Activated CD8-positive, alpha-beta T cell treated with anti-CD3 and anti-CD28 coated beads for 36 hours (primary cell): ENCODE measurements at regions of chr19 and their contacts with region 1.

Region 1: GRCh38 chr19:45692187-45693105 is at the start of gene QPCTL:
- DNase-seq: peak; percentile 99
- ATAC-seq: peak; percentile 91
- H3K4me3 Mint-ChIP-seq: peak within 1 kb of the TSS; percentile 99
- H3K27ac Mint-ChIP-seq: peak within 1 kb of the TSS; percentile 100
- H3K4me1 Mint-ChIP-seq: peaks cover 27% of the 10 kb centered on the region
- H3K27me3 Mint-ChIP-seq: no peaks in the 10 kb centered on the region
- CTCF ChIP-seq: no peak
- total RNA-seq, gene QPCTL: 31.6 to 31.7 TPM

Region 2: GRCh38 chr19:45681391-45682015 is 10.9 kb before region 1 on chr19:
- CTCF ChIA-PET with region 1: interaction called, 101 read pairs
- POLR2A ChIA-PET with region 1: interaction called, 34 read pairs
- intact Hi-C with region 1: no loop called
- DNase-seq: peak; percentile 91
- ATAC-seq: peak; percentile 79
- H3K4me3 Mint-ChIP-seq: peak overlapping the region; percentile 67
- H3K27ac Mint-ChIP-seq: peak overlapping the region; percentile 46
- H3K4me1 Mint-ChIP-seq: peaks cover 17% of the 10 kb centered on the region
- H3K27me3 Mint-ChIP-seq: peaks cover 3% of the 10 kb centered on the region
- CTCF ChIP-seq: peak; percentile 99

Region 3: GRCh38 chr19:45705115-45705514 is 12.7 kb after region 1 on chr19:
- CTCF ChIA-PET with region 1: interaction called, 16 read pairs
- POLR2A ChIA-PET with region 1: interaction called, 24 read pairs
- intact Hi-C with region 1: no loop called
- DNase-seq: no peak
- ATAC-seq: no peak
- H3K4me3 Mint-ChIP-seq: no peak overlapping the region
- H3K27ac Mint-ChIP-seq: no peak overlapping the region
- H3K4me1 Mint-ChIP-seq: peaks cover 5% of the 10 kb centered on the region
- H3K27me3 Mint-ChIP-seq: no peaks in the 10 kb centered on the region
- CTCF ChIP-seq: no peak

Region 4: DNA sequence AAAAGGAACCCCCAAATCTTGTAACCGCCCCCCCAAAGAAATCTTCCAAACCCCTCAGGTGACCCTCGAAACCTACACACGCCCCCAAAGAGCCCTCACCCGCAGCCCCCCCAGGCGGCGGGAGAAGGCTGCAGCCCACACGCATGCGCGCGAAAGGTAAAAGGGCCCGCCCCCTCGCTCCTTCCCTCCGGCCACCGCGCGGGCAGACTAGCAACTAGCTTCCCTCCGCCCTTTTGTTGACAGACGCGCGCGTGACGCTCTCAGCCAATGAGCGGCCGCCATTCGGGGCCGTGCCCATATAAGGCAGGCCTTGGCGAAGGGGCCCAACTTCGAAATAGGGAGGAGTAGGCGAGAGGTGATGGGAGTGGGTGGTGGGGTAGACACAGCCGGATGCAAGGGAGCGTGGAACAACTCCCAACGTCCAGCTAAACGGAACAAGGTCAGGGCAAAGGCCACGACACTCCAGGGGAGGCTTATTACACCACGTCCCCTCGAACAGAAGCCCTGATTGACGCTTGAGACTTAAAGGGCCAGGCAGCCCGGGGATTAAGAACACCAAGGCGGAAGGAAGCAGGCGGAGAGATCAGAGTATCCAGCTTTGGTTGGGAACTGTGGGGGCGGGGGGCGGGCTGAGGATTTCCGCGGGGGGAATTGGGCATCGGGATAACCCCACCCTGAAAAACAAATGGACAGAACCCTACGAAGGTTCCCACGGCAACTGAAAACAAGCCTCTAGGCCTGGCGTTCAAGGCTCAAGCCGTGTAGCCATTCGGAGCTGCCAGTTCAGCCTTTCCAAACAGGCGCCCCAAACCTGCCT is 24.9 kb after region 1 on chr19:
- CTCF ChIA-PET with region 1: interaction called, 62 read pairs
- POLR2A ChIA-PET with region 1: interaction called, 40 read pairs
- intact Hi-C with region 1: no loop called
- DNase-seq: peak; percentile 99
- ATAC-seq: peak; percentile 97
- H3K4me3 Mint-ChIP-seq: peak overlapping the region; percentile 95
- H3K27ac Mint-ChIP-seq: peak overlapping the region; percentile 93
- H3K4me1 Mint-ChIP-seq: peaks cover 33% of the 10 kb centered on the region
- H3K27me3 Mint-ChIP-seq: no peaks in the 10 kb centered on the region
- CTCF ChIP-seq: no peak

Region 5: DNA sequence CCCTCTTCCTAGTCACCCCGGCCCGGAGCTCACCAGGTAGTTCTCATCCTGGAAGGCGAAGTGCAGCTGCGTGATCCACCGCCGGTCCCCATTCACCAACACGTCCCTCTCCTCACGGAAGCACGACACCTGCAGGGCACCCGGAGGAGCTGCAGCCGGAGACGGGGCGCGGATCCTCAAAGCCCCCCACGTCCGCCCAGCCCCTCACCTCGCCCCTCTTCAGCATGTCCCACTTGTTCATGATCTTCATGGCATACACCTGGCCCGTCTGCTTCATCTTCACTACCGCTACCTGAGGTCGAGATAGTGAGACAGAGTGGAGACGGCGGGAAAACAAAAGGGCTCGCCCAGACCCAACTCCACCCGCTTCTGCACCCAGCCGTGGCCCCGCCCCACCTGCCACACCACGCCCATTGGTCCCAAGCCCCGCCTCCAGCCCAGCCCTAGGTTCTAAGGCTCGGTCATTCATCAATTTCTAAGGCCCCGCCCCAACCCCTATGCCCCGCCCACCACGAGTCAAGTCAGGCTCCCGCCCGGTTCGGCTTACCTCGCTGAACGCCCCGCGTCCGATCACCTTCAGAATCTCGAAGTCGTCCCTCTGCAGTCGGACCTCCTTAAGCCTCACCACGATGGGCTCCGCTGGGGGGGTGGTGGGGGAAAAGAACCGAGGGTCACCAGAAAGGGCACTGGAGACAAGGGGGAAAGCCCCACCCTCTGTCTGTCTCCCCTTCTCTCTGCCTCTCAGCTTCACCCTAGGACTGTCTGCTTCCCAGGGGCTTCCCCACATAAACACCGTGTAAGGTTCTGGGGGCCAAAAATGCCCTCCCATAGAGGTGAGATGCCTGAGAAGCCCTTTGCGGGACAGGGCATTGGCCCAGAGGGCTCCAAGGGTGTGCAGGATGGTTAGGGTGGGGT is 87.0 kb after region 1 on chr19:
- CTCF ChIA-PET with region 1: no interaction called
- POLR2A ChIA-PET with region 1: no interaction called
- intact Hi-C with region 1: no loop called
- DNase-seq: peak; percentile 96
- ATAC-seq: peak; percentile 98
- H3K4me3 Mint-ChIP-seq: peak overlapping the region; percentile 63
- H3K27ac Mint-ChIP-seq: no peak overlapping the region
- H3K4me1 Mint-ChIP-seq: peaks cover 17% of the 10 kb centered on the region
- H3K27me3 Mint-ChIP-seq: peaks cover 29% of the 10 kb centered on the region
- CTCF ChIP-seq: peak; percentile 81